ENCODE measurements at regions of chr4 and their contacts with region 1.

Region 1: GRCh38 chr4:15162465-15163283 is 160.4 kb downstream of the CPEB2 start:
- DNase-seq: peak; percentile 51
- H3K4me3 Mint-ChIP-seq: no peak overlapping the region
- H3K27ac Mint-ChIP-seq: peak overlapping the region; percentile 28
- H3K4me1 Mint-ChIP-seq: peaks cover 12% of the 10 kb centered on the region
- H3K27me3 Mint-ChIP-seq: no peaks in the 10 kb centered on the region
- CTCF ChIP-seq: peak; percentile 58

Region 2: GRCh38 chr4:14749910-14750309 is 412.8 kb before region 1 on chr4:
- CTCF ChIA-PET with region 1: interaction called, 5 read pairs
- POLR2A ChIA-PET with region 1: no interaction called
- intact Hi-C with region 1: loop called (anchors 1 kb)
- DNase-seq: peak; percentile 64
- H3K4me3 Mint-ChIP-seq: no peak overlapping the region
- H3K27ac Mint-ChIP-seq: no peak overlapping the region
- H3K4me1 Mint-ChIP-seq: no peaks in the 10 kb centered on the region
- H3K27me3 Mint-ChIP-seq: no peaks in the 10 kb centered on the region
- CTCF ChIP-seq: peak; percentile 25

Region 3: DNA sequence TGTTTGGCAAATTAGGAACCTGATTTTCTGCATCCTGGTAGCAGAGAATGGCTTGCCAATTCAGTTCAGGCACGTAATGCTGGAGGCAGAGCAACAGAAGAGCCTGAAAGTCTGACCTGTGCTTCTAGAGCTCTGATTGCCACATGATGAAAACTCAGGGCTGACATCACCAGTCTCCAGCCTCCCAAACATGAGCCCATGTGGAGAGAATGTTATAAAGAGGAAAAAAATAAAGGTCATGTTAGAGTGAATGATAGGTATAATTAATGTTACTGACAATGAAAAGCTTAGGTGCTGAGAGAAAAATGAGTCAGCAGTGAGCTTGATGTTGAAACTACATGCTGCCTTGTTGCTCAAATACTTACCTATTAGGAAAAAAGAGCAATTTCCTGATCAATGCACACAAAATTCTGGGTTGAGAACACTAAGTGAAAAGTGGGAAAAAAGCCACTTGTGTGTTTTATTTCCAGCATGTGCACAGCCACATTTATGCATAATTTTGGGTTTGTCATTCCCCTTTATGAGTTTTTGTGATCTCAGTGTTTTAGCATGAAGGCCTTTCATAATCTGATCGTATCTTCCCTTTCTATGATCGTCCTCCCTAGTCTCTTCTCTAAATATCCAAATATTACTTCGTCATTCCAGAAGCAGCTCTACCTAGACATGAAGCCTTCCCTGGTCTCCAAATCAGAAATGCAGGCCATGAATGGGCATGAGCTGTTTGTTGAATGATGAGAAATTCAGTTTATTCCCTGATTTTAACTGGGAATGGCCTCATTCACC is 273.7 kb before region 1 on chr4:
- CTCF ChIA-PET with region 1: no interaction called
- POLR2A ChIA-PET with region 1: no interaction called
- intact Hi-C with region 1: loop called (anchors 10 kb)
- DNase-seq: peak; percentile 60
- H3K4me3 Mint-ChIP-seq: no peak overlapping the region
- H3K27ac Mint-ChIP-seq: peak overlapping the region; percentile 70
- H3K4me1 Mint-ChIP-seq: peaks cover 15% of the 10 kb centered on the region
- H3K27me3 Mint-ChIP-seq: no peaks in the 10 kb centered on the region
- CTCF ChIP-seq: no peak

Region 4: GRCh38 chr4:15043226-15043625 is 119.4 kb before region 1 on chr4:
- CTCF ChIA-PET with region 1: interaction called, 11 read pairs
- POLR2A ChIA-PET with region 1: interaction called, 5 read pairs
- intact Hi-C with region 1: loop called (anchors 1 kb)
- DNase-seq: peak; percentile 57
- H3K4me3 Mint-ChIP-seq: no peak overlapping the region
- H3K27ac Mint-ChIP-seq: peak overlapping the region; percentile 53
- H3K4me1 Mint-ChIP-seq: peaks cover 21% of the 10 kb centered on the region
- H3K27me3 Mint-ChIP-seq: no peaks in the 10 kb centered on the region
- CTCF ChIP-seq: no peak

Measured in MCF 10A (cell line).